Heart left ventricle (tissue), 16 donors: ENCODE measurements at regions of chr10 and their contacts with region 1.

Region 1: GRCh38 chr10:43965033-43965917 is 316.6 kb upstream of the ZNF32 start:
- DNase-seq: peak in 3 of 5 donors; percentile 48 to 74 (median 70)
- ATAC-seq: peak; percentile 71 to 91 (median 78)
- H3K4me3 ChIP-seq: no peak overlapping the region
- H3K27ac ChIP-seq: peak overlapping the region; percentile 25 to 90 (median 78)
- H3K4me1 ChIP-seq: peaks cover 2 to 57% (median 23%) of the 10 kb centered on the region in 12 donors
- H3K27me3 ChIP-seq: no peaks in the 10 kb centered on the region
- CTCF ChIP-seq: no peak
- POLR2A ChIP-seq: no peak

Region 2: DNA sequence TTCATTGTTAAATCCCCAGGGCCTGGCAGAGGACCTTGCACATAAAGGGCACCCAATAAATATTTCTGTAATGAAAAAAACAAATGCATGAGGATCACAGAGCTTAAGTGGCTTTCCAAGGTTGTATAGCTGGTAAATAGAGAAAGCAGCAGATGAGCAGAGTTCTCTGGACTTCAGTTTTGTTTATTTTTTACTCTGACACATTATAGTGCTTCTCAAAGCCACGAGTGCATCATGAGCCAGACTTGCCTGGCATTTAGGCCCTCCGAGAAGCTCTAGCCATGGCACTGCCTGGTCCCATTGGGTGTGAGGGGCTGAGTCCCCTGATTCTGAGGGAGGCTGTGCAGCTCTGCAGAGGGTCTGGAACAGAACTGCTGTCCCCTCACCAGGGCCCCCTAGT is 229.4 kb before region 1 on chr10:
- intact Hi-C with region 1: no loop called
- DNase-seq: no peak
- ATAC-seq: no peak
- H3K4me3 ChIP-seq: no peak overlapping the region
- H3K27ac ChIP-seq: no peak overlapping the region
- H3K4me1 ChIP-seq: no peaks in the 10 kb centered on the region
- H3K27me3 ChIP-seq: no peaks in the 10 kb centered on the region
- CTCF ChIP-seq: no peak
- POLR2A ChIP-seq: no peak

Region 3: DNA sequence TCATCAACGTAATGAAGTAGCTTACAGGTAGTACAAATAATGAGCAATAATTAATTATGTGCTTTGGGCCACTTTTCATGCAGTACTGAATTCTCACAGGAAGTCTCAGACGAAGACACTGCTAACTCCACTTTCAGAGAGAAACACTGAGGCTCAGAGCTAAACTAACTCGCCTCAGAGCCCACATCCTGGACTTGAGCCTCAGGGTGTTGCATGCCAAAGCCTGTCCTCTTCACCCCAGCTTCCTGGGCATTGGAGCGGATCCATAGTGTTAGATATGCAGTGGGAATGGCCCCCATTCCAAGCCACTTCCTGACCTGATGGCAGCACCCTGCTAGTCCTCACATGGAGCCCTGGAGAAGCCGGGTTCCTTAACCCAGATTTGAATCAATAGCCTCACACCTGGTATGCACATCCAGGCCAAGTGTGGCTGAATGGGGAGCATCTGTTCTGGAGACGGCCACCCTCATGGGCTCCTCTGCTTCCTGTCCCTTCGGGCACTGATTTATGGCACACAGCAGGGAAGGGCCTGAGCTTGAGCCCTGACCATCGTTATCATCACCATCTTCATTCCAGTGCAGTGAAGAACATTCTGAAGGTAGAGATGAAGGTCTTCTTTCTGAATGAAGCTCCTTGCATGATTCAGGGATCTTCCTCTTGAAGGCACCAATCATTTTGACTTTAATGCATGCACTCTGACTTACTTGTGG is 51.4 kb before region 1 on chr10:
- intact Hi-C with region 1: loop called in 1 of 10 experiments (anchors 5 kb)
- DNase-seq: no peak
- ATAC-seq: no peak
- H3K4me3 ChIP-seq: no peak overlapping the region
- H3K27ac ChIP-seq: no peak overlapping the region
- H3K4me1 ChIP-seq: peaks cover 4 to 29% (median 19%) of the 10 kb centered on the region in 12 donors
- H3K27me3 ChIP-seq: no peaks in the 10 kb centered on the region
- CTCF ChIP-seq: no peak
- POLR2A ChIP-seq: no peak

Region 4: DNA sequence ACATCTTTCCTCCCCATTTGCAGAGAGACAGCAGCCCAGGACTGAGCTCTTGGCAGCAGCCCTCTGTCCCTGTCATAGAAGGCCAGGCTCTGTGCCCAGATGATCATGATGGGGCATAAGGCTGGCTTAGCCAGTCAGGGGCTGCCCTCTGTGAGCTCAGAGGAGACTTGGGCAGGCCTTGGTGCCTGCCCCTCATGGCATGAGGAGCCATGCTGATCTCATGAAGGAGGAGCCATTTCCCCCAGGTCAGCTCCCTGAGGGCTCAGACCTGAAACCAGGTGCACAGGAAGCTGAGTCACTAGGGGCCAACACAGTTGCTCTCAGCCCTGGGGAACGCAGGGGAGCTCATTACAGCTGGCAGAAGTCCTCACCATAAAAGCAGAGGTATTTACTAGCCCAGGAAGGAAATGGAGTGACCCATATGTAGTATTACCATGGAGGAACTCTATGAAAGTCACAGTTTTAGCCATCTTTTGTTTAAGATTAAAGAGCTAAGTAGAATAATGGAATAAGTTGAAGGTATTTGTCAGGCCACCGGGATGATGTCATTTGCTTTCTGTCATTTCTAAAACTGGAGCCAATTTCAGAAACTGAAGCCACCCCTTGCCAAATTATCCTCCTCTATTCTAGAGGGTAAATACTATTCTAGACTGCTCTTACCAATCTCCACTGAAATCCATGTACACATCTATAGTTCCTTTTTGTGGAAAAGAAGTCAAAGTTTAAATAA is 45.8 kb after region 1 on chr10:
- intact Hi-C with region 1: loop called in 1 of 10 experiments (anchors 5 kb)
- DNase-seq: peak in 3 of 5 donors; percentile 40 to 65 (median 60)
- ATAC-seq: peak; percentile 81 to 91 (median 88)
- H3K4me3 ChIP-seq: no peak overlapping the region
- H3K27ac ChIP-seq: peak overlapping the region in 3 of 12 donors; percentile 28 to 53 (median 31)
- H3K4me1 ChIP-seq: peaks cover 0 to 46% (median 20%) of the 10 kb centered on the region in 12 donors
- H3K27me3 ChIP-seq: no peaks in the 10 kb centered on the region
- CTCF ChIP-seq: no peak
- POLR2A ChIP-seq: no peak

Region 5: GRCh38 chr10:44046605-44047004 is 81.3 kb after region 1 on chr10:
- intact Hi-C with region 1: loop called in 1 of 10 experiments (anchors 10 kb)
- DNase-seq: no peak
- ATAC-seq: no peak
- H3K4me3 ChIP-seq: no peak overlapping the region
- H3K27ac ChIP-seq: peak overlapping the region in 4 of 12 donors; percentile 4 to 69 (median 27)
- H3K4me1 ChIP-seq: peaks cover 0 to 33% (median 8%) of the 10 kb centered on the region in 12 donors
- H3K27me3 ChIP-seq: no peaks in the 10 kb centered on the region
- CTCF ChIP-seq: peak in 3 of 12 donors; percentile 7 to 22 (median 11)
- POLR2A ChIP-seq: no peak